WTC11 (cell line): ENCODE measurements at regions of chr6 and their contacts with region 1.

Region 1: DNA sequence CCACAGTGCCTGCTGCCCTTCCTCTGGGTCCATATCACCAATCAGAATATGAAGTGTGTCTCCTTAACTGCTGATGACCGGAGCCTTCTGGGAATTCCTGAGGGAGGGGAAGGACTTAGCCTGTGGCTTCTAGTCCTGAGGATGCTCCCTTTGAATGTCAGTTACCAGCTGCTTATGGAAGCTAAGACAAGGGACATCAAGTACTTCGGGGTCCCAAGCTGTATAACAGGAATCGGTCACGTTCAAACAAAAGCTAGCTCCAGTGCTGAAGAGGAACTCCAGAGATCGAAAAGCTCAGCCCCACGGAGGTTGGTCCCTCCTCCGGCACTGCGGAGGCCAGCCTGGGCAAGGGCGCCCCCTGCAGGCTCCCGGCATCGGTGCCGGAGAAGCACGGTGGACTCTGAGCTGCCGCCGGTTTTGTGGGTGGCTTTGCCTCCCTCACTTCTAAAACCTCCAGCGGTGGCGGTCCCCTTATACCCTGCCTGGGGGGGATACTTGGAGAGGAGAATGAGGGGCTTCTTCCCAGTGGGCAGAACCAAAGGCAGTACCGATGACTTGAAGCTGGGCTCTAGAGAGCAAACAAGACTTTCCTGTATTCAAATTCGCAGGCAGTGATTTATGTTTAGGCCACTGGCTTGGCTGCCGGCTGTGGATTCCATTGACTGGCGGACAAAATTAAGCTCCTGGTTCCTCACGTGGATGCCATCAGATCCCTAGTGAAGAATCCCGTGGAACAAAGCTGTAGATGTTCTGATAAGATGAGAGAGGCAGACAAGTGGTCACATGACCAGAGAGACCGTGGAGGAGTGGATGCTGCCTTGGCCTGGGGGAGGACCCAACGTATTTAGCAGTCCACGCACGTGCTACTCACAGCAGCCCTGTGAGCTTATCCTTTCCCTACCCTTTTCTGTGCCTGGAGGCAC is 16.2 kb upstream of the UBR2 start:
- DNase-seq: peak; percentile 88
- ATAC-seq: peak; percentile 96
- H3K4me3 Mint-ChIP-seq: peak overlapping the region; percentile 78
- H3K27ac Mint-ChIP-seq: peak overlapping the region; percentile 45; the same call in 1 of the 2 replicates
- H3K4me1 Mint-ChIP-seq: peaks cover 14% of the 10 kb centered on the region
- H3K27me3 Mint-ChIP-seq: peaks cover 8% of the 10 kb centered on the region
- CTCF ChIP-seq: peak; percentile 98

Region 2: GRCh38 chr6:40860859-40861258 is 1686.8 kb before region 1 on chr6:
- CTCF ChIA-PET with region 1: no interaction called
- POLR2A ChIA-PET with region 1: no interaction called
- DNase-seq: no peak
- ATAC-seq: no peak
- H3K4me3 Mint-ChIP-seq: no peak overlapping the region
- H3K27ac Mint-ChIP-seq: no peak overlapping the region
- H3K4me1 Mint-ChIP-seq: no peaks in the 10 kb centered on the region
- H3K27me3 Mint-ChIP-seq: peaks cover 3% of the 10 kb centered on the region
- CTCF ChIP-seq: no peak

Region 3: DNA sequence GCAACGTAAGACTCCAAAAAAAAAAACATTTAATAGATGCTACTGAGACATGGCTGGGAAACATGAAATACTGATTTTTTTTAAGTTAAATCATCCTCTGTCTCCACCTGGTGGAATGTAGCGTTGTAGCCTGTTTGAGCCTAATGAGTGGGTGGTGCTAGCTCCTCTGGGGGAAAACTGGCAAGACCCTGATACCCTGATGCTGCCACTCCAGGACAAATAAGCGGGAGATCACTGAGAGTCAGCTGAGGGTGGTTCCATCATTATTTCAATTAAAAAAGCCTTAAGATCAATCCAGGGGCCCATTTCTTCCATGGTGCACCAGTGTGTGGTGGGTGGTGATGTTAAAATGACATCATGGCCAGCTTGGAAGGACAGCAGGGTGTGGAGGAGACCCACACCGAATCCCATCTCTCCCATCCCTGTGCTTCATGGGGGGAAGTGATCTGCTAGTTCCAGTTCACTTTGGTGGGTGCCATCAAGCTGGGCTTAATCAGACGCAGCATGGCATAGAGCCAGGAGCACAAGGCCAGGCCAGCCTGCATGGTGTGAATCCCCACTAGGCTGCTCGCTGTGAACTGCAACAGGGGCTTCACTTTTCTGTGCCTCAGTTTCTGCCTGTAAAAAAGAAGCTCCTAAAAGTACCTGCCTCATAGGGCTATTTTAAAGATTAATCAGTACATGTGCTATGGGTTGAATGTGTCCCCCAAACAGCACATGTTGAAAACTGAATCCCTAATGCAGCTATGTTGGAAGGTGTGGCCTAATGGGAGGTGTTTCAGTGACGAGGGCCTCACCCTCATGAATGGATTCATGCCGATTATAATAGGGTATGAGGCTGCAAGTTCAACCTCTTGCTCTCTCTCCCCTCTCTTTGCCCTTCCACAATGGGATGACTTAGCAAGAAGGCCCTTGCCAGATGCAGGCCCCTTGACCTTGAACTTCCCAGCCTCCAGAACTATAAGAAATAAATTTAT is 317.0 kb before region 1 on chr6:
- CTCF ChIA-PET with region 1: interaction called, 13 read pairs
- POLR2A ChIA-PET with region 1: no interaction called
- DNase-seq: no peak
- ATAC-seq: peak; percentile 78
- H3K4me3 Mint-ChIP-seq: no peak overlapping the region
- H3K27ac Mint-ChIP-seq: peak overlapping the region; percentile 37; the same call in 1 of the 2 replicates
- H3K4me1 Mint-ChIP-seq: no peaks in the 10 kb centered on the region
- H3K27me3 Mint-ChIP-seq: no peaks in the 10 kb centered on the region
- CTCF ChIP-seq: no peak

Region 4: GRCh38 chr6:42315991-42316378 is 231.7 kb before region 1 on chr6:
- CTCF ChIA-PET with region 1: interaction called, 23 read pairs
- POLR2A ChIA-PET with region 1: no interaction called
- DNase-seq: no peak
- ATAC-seq: peak; percentile 76
- H3K4me3 Mint-ChIP-seq: no peak overlapping the region
- H3K27ac Mint-ChIP-seq: peak overlapping the region; percentile 64; the same call in 1 of the 2 replicates
- H3K4me1 Mint-ChIP-seq: peaks cover 43% of the 10 kb centered on the region
- H3K27me3 Mint-ChIP-seq: no peaks in the 10 kb centered on the region
- CTCF ChIP-seq: no peak

Region 5: DNA sequence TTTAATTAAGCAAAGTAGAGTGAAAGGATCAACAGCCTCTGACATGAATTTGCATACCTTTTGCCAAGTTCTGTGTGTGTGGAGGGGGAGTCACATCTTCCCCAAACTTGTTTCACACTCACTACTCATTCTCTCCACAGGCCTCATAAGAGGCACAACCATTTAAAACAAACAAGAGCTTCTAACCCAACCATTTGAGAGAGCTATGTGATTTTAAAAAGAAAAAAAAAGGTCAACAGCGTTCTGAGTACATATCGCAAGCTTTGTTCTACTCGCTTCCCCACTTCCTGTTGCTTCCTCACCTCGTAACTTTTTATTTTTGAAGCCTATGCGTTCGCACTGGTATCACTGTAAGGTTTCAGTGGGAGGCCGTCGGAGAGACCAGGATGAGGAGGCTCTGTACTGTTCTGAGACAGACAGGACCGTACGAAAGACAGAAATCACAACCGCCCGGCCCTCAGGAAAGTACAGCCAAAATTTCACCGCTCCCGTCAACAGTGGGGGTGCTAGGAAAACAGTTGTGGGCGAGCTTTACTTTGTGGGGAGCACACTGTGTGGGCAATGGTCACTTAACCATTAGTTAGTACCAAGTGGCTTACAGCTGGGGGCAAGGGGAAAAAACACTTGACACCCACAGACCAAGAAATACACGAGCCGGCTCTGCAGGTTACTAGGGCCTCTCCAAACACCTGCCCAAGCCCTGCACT is 157.3 kb before region 1 on chr6:
- CTCF ChIA-PET with region 1: interaction called, 11 read pairs
- POLR2A ChIA-PET with region 1: no interaction called
- DNase-seq: no peak
- ATAC-seq: peak; percentile 21
- H3K4me3 Mint-ChIP-seq: no peak overlapping the region
- H3K27ac Mint-ChIP-seq: peak overlapping the region; percentile 82
- H3K4me1 Mint-ChIP-seq: peaks cover 61% of the 10 kb centered on the region
- H3K27me3 Mint-ChIP-seq: no peaks in the 10 kb centered on the region
- CTCF ChIP-seq: no peak

Region 6: DNA sequence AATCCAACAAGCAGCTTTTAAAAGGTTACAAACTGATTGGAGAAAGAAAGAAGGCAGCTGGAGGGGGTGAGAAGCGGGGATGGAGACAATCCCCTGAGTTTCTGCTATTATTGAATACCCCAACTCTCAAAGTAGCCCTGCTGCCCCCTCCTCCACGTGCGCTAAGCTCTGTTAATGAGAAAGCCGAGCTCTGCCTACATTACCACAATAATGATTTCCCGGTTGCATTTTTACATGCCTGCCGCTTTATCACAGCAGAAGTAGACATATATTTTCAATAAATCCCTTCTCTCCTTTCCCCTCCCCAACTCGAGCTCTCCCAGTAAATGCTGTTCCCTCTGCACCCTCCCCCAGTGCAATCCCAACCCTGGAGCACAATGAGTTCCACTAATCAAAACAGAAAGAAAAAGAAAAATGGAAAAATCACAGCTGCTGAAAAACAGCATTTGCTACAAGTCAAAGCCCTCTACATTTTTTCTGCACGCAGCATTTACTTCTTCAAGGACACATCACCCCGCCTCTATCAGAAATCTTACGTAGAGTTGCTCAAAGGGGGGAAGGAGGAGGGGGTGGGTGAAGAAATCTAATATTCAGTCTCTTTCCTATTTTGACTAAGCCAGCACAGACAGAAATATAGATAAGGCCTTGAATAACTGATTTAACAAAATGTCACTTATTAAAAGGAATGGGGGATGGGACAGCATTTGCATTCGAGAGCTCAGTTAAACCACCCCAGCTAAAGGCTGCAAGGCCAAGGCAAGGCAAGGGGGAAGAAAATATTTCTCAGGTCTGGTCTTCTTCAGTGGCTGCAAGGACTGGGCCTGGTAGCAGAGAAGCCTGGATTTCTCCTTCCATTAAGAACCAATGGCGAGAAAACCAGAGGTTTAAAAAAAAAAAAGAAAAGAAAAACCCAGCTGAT is 106.6 kb before region 1 on chr6:
- CTCF ChIA-PET with region 1: interaction called, 35 read pairs
- POLR2A ChIA-PET with region 1: no interaction called
- DNase-seq: no peak
- ATAC-seq: peak; percentile 14
- H3K4me3 Mint-ChIP-seq: peak overlapping the region; percentile 67
- H3K27ac Mint-ChIP-seq: peak overlapping the region; percentile 98
- H3K4me1 Mint-ChIP-seq: peaks cover 82% of the 10 kb centered on the region
- H3K27me3 Mint-ChIP-seq: no peaks in the 10 kb centered on the region
- CTCF ChIP-seq: no peak

Region 7: GRCh38 chr6:42511803-42512422 is 35.8 kb before region 1 on chr6:
- CTCF ChIA-PET with region 1: interaction called, 27 read pairs
- POLR2A ChIA-PET with region 1: no interaction called
- DNase-seq: no peak
- ATAC-seq: no peak
- H3K4me3 Mint-ChIP-seq: no peak overlapping the region
- H3K27ac Mint-ChIP-seq: no peak overlapping the region
- H3K4me1 Mint-ChIP-seq: peaks cover 7% of the 10 kb centered on the region; the same call in 1 of the 2 replicates
- H3K27me3 Mint-ChIP-seq: peaks cover 2% of the 10 kb centered on the region
- CTCF ChIP-seq: no peak

Region 8: DNA sequence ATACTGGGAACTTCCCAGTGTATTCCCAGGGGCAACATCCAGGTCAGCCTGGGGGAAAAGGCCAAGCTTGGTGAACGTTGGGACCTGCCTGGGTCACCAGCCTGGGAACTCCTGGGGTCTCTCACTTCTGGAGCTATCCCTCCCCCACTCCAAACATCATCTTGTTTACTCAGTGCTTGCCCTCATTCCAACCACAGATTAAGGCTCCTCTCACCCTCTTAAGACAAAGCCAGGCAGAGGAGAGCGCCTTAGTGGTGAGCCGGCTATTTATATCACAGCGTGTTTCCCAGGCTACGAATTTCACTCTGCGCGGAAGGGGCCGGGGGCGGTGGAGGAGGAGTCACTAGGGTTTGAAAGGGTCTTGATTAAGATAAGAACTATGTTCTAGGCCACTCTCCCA is 162.6 kb after region 1 on chr6:
- CTCF ChIA-PET with region 1: no interaction called
- POLR2A ChIA-PET with region 1: no interaction called
- DNase-seq: no peak
- ATAC-seq: peak; percentile 90
- H3K4me3 Mint-ChIP-seq: no peak overlapping the region
- H3K27ac Mint-ChIP-seq: no peak overlapping the region
- H3K4me1 Mint-ChIP-seq: peaks cover 9% of the 10 kb centered on the region
- H3K27me3 Mint-ChIP-seq: peaks cover 8% of the 10 kb centered on the region
- CTCF ChIP-seq: no peak